ENCODE measurements at regions of chr5 and their contacts with region 1.

Region 1: GRCh38 chr5:139968547-139969261 is 74.4 kb downstream of the NRG2 start:
- DNase-seq: peak; percentile 85 to 96 (median 92)
- H3K4me3 ChIP-seq: no peak overlapping the region
- H3K27ac ChIP-seq: no peak overlapping the region
- H3K4me1 ChIP-seq: peaks cover 3% of the 10 kb centered on the region
- H3K27me3 ChIP-seq: no peaks in the 10 kb centered on the region
- CTCF ChIP-seq: peak; percentile 96 to 100 (median 100)
- EP300 ChIP-seq: no peak
- POLR2A ChIP-seq: peak; percentile 50

Region 2: GRCh38 chr5:139849942-139850341 is 118.8 kb before region 1 on chr5:
- intact Hi-C with region 1: loop called in 1 of 4 experiments (anchors 5 kb)
- DNase-seq: no peak
- H3K4me3 ChIP-seq: no peak overlapping the region
- H3K27ac ChIP-seq: peak overlapping the region; percentile 1 to 87
- H3K4me1 ChIP-seq: peaks cover 5% of the 10 kb centered on the region
- H3K27me3 ChIP-seq: no peaks in the 10 kb centered on the region
- CTCF ChIP-seq: no peak
- EP300 ChIP-seq: no peak
- POLR2A ChIP-seq: no peak

Region 3: GRCh38 chr5:139863855-139864558 is 104.7 kb before region 1 on chr5:
- intact Hi-C with region 1: loop called in 2 of 4 experiments (anchors 5 to 10 kb)
- DNase-seq: peak; percentile 71 to 82 (median 79)
- H3K4me3 ChIP-seq: no peak overlapping the region
- H3K27ac ChIP-seq: peak overlapping the region; percentile 33 to 58
- H3K4me1 ChIP-seq: peaks cover 30% of the 10 kb centered on the region
- H3K27me3 ChIP-seq: no peaks in the 10 kb centered on the region
- CTCF ChIP-seq: peak; percentile 72 to 75 (median 75)
- EP300 ChIP-seq: no peak
- POLR2A ChIP-seq: no peak

Measured in ovary (tissue), 10 donors.